ENCODE measurements at regions of chr12 and their contacts with region 1.

Region 1: DNA sequence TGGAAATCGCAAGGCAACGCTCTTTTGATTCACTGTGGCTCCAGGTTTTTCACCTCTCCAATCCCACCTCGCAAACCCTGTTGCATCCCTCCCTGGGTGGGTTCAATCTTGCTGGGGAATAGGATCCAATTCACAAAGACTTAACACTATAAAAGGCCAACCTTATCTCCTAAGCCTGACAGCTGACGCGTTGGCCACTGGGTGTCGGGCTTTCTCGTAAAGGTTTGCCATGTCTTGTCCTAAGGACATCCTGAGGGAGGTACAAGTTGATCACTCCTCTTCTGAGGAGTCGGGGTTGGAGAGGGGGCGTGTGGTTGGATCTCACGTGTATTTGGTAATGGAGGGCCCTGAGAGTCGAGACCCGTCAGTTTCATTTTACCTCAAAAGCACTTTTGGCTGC is 112.6 kb upstream of the FZD10 start:
- DNase-seq: no peak
- ATAC-seq: no peak
- H3K4me3 ChIP-seq: no peak overlapping the region
- H3K4me3 Mint-ChIP-seq: no peak overlapping the region
- H3K27ac ChIP-seq: no peak overlapping the region
- H3K27ac Mint-ChIP-seq: no peak overlapping the region
- H3K4me1 ChIP-seq: peaks cover 0 to 5% of the 10 kb centered on the region in 2 donors
- H3K4me1 Mint-ChIP-seq: peaks cover 1% of the 10 kb centered on the region
- H3K27me3 ChIP-seq: peaks cover 0 to 14% (median 3%) of the 10 kb centered on the region in 4 experiments
- H3K27me3 Mint-ChIP-seq: peaks cover 14% of the 10 kb centered on the region
- CTCF ChIP-seq: no peak

Region 2: DNA sequence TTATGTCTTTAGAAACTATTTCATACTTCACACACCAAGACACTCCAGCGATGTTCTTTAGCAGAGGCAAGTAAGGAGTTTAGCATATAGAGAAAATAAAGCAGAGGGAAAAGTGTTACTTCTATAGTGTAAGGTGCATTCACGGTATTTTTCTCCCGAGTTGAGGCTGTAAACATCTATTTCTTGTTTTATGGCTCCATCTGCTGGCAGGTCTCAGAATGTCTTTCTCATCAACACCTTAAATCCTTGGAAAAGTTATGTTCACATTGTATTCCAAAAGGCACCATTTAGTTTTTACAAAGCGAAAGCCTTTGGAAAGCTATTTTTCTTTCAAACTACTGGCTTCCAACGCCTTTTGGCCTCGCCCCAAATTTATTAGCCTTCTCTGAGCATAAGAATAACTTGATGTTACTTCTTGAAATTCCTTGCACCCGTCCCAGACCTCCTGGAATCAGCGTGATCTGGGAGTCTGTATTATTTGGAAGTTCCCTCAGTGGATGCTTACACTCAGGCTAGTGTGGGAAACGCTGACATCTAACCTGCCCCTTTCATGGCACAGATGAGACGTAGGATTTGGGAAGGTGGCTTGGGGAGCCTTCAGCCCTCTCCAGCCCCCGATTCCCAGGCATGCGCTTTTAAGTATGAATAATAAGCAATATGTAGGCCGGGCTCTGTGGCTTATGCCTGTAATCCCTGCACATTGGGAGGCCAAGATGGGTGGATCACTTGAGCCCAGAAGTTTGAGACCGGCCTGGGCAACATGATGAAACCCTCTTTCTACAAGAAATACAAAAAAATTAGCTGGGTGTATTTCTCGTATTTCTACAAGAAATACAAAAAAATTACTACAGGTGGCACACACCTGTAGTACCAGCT is 286.1 kb after region 1 on chr12:
- CTCF ChIA-PET with region 1: no interaction called
- POLR2A ChIA-PET with region 1: no interaction called
- intact Hi-C with region 1: loop called (anchors 2 kb)
- DNase-seq: peak; percentile 31
- ATAC-seq: no peak
- H3K4me3 ChIP-seq: no peak overlapping the region
- H3K4me3 Mint-ChIP-seq: no peak overlapping the region
- H3K27ac ChIP-seq: no peak overlapping the region
- H3K27ac Mint-ChIP-seq: no peak overlapping the region
- H3K4me1 ChIP-seq: no peaks in the 10 kb centered on the region
- H3K4me1 Mint-ChIP-seq: no peaks in the 10 kb centered on the region
- H3K27me3 ChIP-seq: peaks cover 0 to 9% (median 0%) of the 10 kb centered on the region in 4 experiments
- H3K27me3 Mint-ChIP-seq: peaks cover 12% of the 10 kb centered on the region
- CTCF ChIP-seq: peak; percentile 65

Measured in B cell (primary cell).